MCF 10A (cell line): ENCODE measurements at regions of chr1 and their contacts with region 1.

Region 1: DNA sequence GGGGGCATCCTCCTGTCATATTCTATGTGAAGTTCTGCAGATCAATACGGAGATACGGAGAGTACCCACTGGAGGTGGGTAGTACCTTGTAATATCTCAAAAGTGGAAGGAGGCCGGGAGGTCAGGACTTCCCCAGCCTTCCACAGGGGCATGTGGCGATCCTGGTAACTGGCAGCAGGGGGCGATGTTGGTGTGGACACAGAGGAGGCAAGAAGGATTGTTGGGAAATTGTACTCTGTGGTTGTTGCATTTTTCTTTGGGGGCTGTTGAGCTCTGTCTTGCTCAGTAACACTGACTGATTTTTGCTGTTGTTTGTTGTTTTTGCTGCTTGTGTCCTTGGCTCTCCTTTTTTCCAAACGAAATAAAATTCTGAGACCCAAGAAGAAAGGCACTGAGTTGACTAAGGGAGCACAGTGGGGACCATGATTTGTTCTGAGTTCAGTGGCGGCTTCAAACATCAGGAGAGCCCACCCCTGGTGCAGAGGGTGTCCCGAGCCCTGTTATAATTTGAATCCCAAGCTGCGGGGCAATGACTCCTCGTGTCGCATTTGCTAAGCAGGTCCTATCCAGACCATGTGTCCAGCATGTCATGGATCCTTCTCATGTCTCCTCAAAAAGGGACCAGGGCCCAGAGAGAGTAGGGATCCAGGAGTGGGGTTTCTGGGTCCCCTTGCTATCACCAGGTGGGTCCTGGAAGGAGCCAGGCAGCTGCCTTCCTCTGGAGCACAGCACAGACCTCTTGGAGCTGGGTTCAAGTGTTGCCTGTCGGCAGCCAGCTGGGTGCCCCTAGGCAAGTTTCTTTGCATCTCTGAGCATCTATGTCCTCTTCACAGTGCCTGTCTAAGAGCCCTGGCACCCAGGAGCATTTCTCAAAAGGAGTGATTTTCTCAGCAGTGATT is 22.8 kb downstream of the LHX4 start:
- DNase-seq: peak; percentile 84
- H3K4me3 Mint-ChIP-seq: no peak overlapping the region
- H3K27ac Mint-ChIP-seq: no peak overlapping the region
- H3K4me1 Mint-ChIP-seq: peaks cover 6% of the 10 kb centered on the region
- H3K27me3 Mint-ChIP-seq: peaks cover 5% of the 10 kb centered on the region
- CTCF ChIP-seq: peak; percentile 97

Region 2: DNA sequence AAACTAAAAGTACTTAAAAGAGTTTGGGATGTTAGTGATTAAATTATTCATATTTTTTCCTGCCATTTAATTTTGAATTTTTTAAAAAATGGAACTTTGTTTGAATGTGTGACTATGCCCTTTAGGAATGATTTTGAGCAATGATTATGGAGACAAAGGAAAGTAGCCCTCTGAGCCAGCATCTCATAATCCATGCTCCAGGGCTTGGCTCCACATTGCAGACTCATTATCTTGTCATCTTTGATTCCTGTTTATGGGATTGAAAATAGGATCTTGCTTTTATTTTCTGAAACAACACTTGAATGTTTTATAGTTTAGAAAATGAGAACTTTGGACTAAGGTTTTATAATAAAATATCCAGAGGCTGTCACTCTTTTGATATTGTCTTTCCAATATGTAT is 872.6 kb before region 1 on chr1:
- CTCF ChIA-PET with region 1: no interaction called
- POLR2A ChIA-PET with region 1: no interaction called
- intact Hi-C with region 1: no loop called
- DNase-seq: no peak
- H3K4me3 Mint-ChIP-seq: no peak overlapping the region
- H3K27ac Mint-ChIP-seq: no peak overlapping the region
- H3K4me1 Mint-ChIP-seq: no peaks in the 10 kb centered on the region
- H3K27me3 Mint-ChIP-seq: no peaks in the 10 kb centered on the region
- CTCF ChIP-seq: no peak

Region 3: DNA sequence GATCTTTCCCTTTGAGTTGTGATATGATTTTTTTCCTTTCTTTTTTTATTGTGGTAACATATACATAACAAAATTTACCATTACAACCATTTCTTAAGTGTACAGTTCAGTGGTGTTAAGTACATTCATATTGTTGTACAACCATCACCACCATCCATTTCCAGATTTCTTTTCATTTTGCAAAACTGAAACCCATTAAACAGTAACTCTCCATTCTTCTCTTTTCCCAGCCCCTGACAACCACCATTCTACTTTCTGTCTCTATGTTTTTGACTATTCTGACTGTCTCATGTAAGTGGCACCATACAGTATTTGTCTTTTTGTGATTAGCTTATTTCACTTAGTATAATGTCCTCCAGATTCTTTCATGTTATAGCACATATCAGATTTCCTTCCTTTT is 267.9 kb before region 1 on chr1:
- CTCF ChIA-PET with region 1: no interaction called
- POLR2A ChIA-PET with region 1: no interaction called
- intact Hi-C with region 1: no loop called
- DNase-seq: no peak
- H3K4me3 Mint-ChIP-seq: no peak overlapping the region
- H3K27ac Mint-ChIP-seq: no peak overlapping the region
- H3K4me1 Mint-ChIP-seq: peaks cover 20% of the 10 kb centered on the region
- H3K27me3 Mint-ChIP-seq: no peaks in the 10 kb centered on the region
- CTCF ChIP-seq: no peak

Region 4: GRCh38 chr1:180167721-180168467 is 85.0 kb before region 1 on chr1:
- CTCF ChIA-PET with region 1: no interaction called
- POLR2A ChIA-PET with region 1: no interaction called
- intact Hi-C with region 1: no loop called
- DNase-seq: peak; percentile 97
- H3K4me3 Mint-ChIP-seq: no peak overlapping the region
- H3K27ac Mint-ChIP-seq: peak overlapping the region; percentile 77
- H3K4me1 Mint-ChIP-seq: peaks cover 38% of the 10 kb centered on the region
- H3K27me3 Mint-ChIP-seq: no peaks in the 10 kb centered on the region
- CTCF ChIP-seq: peak; percentile 43

Region 5: GRCh38 chr1:180234369-180235076 is 18.4 kb before region 1 on chr1:
- CTCF ChIA-PET with region 1: interaction called, 11 read pairs
- POLR2A ChIA-PET with region 1: no interaction called
- intact Hi-C with region 1: no loop called
- DNase-seq: no peak
- H3K4me3 Mint-ChIP-seq: peak overlapping the region; percentile 19
- H3K27ac Mint-ChIP-seq: no peak overlapping the region
- H3K4me1 Mint-ChIP-seq: no peaks in the 10 kb centered on the region
- H3K27me3 Mint-ChIP-seq: peaks cover 83% of the 10 kb centered on the region
- CTCF ChIP-seq: no peak

Region 6: DNA sequence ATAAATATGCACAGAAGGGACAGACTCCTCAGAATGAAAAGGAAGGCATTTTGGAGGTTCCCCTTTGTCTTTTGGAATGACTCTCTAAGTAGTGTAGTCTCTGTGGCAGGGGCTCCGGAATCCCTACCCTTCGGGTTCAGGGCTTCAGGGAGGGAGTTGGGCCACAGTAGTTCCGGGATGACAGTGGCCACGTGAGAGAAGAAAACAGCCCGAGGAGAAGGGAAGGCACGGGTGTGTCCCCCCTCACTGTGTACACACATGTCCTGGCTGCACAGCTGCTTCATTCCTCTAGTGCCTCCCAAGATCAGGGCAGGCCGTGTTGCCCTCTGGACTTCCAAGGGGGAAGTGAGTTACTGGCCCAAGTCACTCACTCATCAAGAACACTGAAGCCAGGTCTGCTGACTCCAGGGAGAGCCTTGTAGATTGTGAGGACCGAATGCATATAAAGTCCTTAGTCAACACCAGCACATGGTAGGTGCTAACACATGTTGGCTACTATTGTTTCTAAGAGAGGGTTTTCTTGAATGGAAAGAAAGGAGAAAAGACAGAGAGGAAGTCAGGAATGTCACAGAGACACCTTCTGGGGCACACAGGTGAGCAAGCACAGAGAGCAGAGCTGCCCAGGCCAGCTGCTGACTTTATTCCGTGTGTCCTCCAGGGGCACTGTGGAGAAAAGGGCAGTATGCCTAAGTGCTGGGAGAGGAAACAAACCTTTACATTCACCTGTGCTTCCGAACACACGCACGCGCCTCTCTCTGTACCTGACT is 17.1 kb after region 1 on chr1:
- CTCF ChIA-PET with region 1: interaction called, 15 read pairs
- POLR2A ChIA-PET with region 1: interaction called, 4 read pairs
- intact Hi-C with region 1: no loop called
- DNase-seq: peak; percentile 62
- H3K4me3 Mint-ChIP-seq: no peak overlapping the region
- H3K27ac Mint-ChIP-seq: no peak overlapping the region
- H3K4me1 Mint-ChIP-seq: no peaks in the 10 kb centered on the region
- H3K27me3 Mint-ChIP-seq: no peaks in the 10 kb centered on the region
- CTCF ChIP-seq: peak; percentile 48

Region 7: DNA sequence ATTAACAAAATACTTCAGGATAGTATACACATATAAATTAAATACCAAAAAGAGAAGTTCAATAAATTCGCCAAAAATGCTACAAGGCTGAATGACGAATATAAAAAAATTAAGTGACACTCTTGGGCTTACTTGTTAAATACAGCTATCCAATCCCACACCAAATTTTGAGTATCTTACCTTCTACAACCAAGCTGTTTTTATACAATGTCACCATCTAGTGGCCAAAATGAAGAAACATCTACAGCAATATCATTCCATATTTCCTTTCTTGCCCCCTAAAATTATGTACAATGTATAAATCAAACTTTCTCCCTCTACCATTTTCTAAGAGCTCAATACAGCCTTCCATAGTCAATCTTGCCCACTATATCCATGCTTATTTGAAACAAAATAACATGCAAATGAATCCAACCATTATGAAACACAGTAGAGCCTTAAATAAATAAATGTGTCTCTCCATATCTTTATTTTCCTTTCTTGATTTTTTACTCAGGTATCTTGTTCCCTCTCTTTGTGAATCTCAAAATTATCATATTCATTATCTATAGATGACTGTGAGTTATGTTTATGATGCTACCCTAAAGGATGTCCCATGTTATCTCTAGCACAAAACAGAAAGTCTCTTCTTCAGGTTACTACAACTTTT is 163.2 kb after region 1 on chr1:
- CTCF ChIA-PET with region 1: interaction called, 9 read pairs
- POLR2A ChIA-PET with region 1: no interaction called
- intact Hi-C with region 1: loop called (anchors 1 kb)
- DNase-seq: peak; percentile 49
- H3K4me3 Mint-ChIP-seq: no peak overlapping the region
- H3K27ac Mint-ChIP-seq: no peak overlapping the region
- H3K4me1 Mint-ChIP-seq: no peaks in the 10 kb centered on the region
- H3K27me3 Mint-ChIP-seq: no peaks in the 10 kb centered on the region
- CTCF ChIP-seq: peak; percentile 65